MCF 10A (cell line): ENCODE measurements at regions of chr13 and their contacts with region 1.

Region 1: DNA sequence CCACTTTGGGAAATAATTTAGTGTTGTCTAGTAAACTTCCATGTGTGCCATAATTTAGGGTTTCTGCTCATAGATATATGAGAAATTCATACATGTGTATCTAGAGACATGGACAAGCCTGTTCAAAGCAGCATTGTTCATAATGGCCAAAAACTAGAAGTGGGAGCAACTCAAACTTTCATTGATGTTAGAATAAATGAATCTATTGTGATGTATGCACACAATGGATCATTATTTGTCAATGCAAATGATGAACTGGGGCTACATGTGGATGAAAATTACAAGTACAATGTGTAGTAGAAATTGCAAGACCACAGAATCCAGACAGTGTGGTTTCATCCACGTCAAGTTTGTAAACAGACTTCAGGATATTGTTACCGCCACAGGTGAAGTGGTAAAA is 284.7 kb downstream of the SLC7A1 start:
- DNase-seq: no peak
- H3K4me3 Mint-ChIP-seq: no peak overlapping the region
- H3K27ac Mint-ChIP-seq: no peak overlapping the region
- H3K4me1 Mint-ChIP-seq: no peaks in the 10 kb centered on the region
- H3K27me3 Mint-ChIP-seq: no peaks in the 10 kb centered on the region
- CTCF ChIP-seq: no peak

Region 2: DNA sequence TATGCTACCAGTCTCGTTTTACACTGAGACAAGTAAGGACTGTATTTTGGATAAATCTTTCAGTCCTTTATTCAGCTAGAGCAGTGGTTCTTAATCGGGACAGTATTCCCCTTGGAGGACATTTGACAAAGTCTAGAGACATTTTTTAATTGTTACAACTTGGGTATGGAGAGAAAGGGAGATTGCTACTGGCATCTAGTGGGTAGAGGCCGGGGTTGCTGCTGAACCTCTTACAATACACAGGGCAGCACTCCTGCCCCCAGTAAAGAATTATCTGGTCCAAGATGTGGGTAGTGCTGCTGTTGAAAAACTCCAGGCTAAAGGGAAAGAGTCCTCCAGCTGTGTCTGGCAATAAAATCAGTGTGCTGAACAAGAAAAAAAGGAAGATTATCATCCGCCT is 50.1 kb before region 1 on chr13:
- CTCF ChIA-PET with region 1: no interaction called
- POLR2A ChIA-PET with region 1: no interaction called
- intact Hi-C with region 1: loop called (anchors 2 kb)
- DNase-seq: no peak
- H3K4me3 Mint-ChIP-seq: no peak overlapping the region
- H3K27ac Mint-ChIP-seq: no peak overlapping the region
- H3K4me1 Mint-ChIP-seq: no peaks in the 10 kb centered on the region
- H3K27me3 Mint-ChIP-seq: no peaks in the 10 kb centered on the region
- CTCF ChIP-seq: no peak